Common myeloid progenitor, CD34-positive (primary cell): ENCODE measurements at regions of chr3 and their contacts with region 1.

Region 1: GRCh38 chr3:52742418-52743041 is 28.2 kb downstream of the NEK4 start:
- DNase-seq: peak; percentile 30 to 46 (median 31)
- H3K4me3 ChIP-seq: no peak overlapping the region
- H3K27ac ChIP-seq: no peak overlapping the region
- H3K4me1 ChIP-seq: no peaks in the 10 kb centered on the region
- H3K27me3 ChIP-seq: no peaks in the 10 kb centered on the region

Region 2: GRCh38 chr3:52596658-52597265 is 145.8 kb before region 1 on chr3:
- CTCF ChIA-PET with region 1: no interaction called
- POLR2A ChIA-PET with region 1: no interaction called
- DNase-seq: no peak
- H3K4me3 ChIP-seq: no peak overlapping the region
- H3K27ac ChIP-seq: no peak overlapping the region
- H3K4me1 ChIP-seq: no peaks in the 10 kb centered on the region
- H3K27me3 ChIP-seq: no peaks in the 10 kb centered on the region

Region 3: GRCh38 chr3:52820736-52821135 is 78.2 kb after region 1 on chr3:
- CTCF ChIA-PET with region 1: interaction called, 17 read pairs
- POLR2A ChIA-PET with region 1: no interaction called
- DNase-seq: peak in 2 of 3 donors; percentile 28 to 35
- H3K4me3 ChIP-seq: no peak overlapping the region
- H3K27ac ChIP-seq: no peak overlapping the region
- H3K4me1 ChIP-seq: no peaks in the 10 kb centered on the region
- H3K27me3 ChIP-seq: no peaks in the 10 kb centered on the region